ENCODE measurements at regions of chrX and their contacts with region 1.

Region 1: GRCh38 chrX:110116066-110116980 is 113.4 kb downstream of the TMEM164 start:
- DNase-seq: no peak
- H3K4me3 ChIP-seq: no peak overlapping the region
- H3K27ac ChIP-seq: no peak overlapping the region
- H3K4me1 ChIP-seq: peaks cover 9% of the 10 kb centered on the region
- H3K27me3 ChIP-seq: no peaks in the 10 kb centered on the region
- CTCF ChIP-seq: no peak

Region 2: DNA sequence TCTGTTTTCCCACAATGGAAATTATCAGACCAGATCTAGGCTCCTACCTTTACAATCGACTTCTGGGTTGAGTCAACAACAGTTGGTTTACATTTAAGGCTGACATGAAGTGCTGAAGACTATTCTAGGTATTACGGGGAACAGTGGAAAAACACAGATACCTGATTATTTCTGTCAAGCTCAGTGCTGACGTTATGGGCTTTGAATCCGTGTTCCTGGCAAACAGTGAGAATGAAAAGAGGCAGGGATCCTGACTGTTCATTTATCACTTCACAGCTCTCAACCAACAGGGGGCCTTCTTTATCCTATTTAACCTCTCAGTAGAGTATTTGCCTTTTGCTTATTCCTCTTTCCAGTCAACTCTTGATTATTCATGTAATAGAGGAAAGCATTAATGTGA is 70.3 kb before region 1 on chrX:
- CTCF ChIA-PET with region 1: no interaction called
- POLR2A ChIA-PET with region 1: no interaction called
- intact Hi-C with region 1: no loop called
- DNase-seq: no peak
- H3K4me3 ChIP-seq: no peak overlapping the region
- H3K27ac ChIP-seq: no peak overlapping the region
- H3K4me1 ChIP-seq: 0 out of 2 replicates have a peak, but pooled peaks cover 7% of the 10 kb centered on the region
- H3K27me3 ChIP-seq: no peaks in the 10 kb centered on the region
- CTCF ChIP-seq: no peak

Region 3: DNA sequence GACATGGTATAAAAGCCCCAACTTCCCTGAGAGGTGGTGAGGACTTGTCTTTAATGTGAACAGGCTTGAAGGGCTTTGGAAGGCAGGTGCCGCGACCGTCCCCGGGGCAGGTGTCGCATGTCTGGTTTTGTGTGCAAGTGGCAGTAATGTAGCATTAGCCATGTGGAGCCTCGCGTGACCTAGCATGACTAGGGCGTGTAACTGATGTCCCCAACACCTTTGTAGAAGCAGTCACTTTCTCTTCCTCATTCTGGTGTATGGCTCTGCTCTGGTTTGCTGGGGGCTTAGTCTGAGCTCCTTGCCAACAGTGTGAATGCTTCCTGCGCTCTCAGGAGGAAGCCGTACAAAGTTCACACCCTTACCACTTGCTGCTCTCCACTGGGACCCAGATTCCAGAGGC is 55.9 kb after region 1 on chrX:
- CTCF ChIA-PET with region 1: no interaction called
- POLR2A ChIA-PET with region 1: no interaction called
- intact Hi-C with region 1: no loop called
- DNase-seq: no peak
- H3K4me3 ChIP-seq: no peak overlapping the region
- H3K27ac ChIP-seq: no peak overlapping the region
- H3K4me1 ChIP-seq: peaks cover 38% of the 10 kb centered on the region
- H3K27me3 ChIP-seq: no peaks in the 10 kb centered on the region
- CTCF ChIP-seq: no peak

Region 4: DNA sequence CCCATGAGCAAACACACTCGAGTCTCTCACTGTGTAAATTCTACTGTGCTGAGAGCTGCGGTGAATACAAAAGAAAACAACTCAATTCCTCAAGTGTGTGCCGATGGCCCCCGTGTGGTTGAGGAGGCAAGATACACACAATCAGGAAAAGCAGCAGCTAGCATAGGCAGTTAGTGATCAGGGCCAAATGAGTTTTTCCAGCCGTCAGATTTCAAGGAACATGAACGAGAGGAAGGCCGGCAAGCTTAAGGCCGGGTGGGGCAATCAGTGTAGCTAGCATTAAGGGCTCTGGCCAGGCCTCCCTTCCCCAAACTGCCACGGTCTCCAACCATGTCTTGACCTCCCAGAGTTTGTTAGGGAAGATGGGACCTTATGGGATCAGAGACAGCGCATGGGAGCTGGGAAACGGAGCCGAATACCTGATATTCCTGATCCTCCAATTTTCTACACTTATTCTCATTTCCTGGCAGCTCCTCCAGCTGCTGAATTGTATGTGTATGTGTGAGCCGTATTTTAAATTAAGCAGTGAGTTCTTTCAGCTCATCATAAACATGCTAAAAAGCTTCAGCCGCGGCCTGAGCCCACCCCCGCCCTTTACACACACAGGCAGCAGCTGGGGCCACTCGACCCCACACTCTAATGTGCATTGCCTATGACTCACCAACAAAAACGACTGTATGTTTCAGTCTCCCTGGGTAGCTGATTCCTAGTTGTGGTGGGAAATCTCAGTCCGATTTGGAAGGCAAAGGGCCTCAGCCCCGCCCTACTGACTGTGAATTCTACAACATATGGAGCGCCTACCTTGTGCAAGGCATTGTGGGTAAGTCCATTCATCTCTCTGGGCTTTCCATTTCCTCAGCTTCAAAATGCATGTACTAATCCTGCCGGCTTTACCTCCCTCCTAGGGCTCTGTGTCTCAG is 302.3 kb after region 1 on chrX:
- CTCF ChIA-PET with region 1: no interaction called
- POLR2A ChIA-PET with region 1: interaction called, 14 read pairs
- intact Hi-C with region 1: no loop called
- DNase-seq: no peak
- H3K4me3 ChIP-seq: no peak overlapping the region
- H3K27ac ChIP-seq: no peak overlapping the region
- H3K4me1 ChIP-seq: 0 out of 2 replicates have a peak, but pooled peaks cover 7% of the 10 kb centered on the region
- H3K27me3 ChIP-seq: no peaks in the 10 kb centered on the region
- CTCF ChIP-seq: peak; percentile 48; the same call in 1 of the 2 replicates

Region 5: DNA sequence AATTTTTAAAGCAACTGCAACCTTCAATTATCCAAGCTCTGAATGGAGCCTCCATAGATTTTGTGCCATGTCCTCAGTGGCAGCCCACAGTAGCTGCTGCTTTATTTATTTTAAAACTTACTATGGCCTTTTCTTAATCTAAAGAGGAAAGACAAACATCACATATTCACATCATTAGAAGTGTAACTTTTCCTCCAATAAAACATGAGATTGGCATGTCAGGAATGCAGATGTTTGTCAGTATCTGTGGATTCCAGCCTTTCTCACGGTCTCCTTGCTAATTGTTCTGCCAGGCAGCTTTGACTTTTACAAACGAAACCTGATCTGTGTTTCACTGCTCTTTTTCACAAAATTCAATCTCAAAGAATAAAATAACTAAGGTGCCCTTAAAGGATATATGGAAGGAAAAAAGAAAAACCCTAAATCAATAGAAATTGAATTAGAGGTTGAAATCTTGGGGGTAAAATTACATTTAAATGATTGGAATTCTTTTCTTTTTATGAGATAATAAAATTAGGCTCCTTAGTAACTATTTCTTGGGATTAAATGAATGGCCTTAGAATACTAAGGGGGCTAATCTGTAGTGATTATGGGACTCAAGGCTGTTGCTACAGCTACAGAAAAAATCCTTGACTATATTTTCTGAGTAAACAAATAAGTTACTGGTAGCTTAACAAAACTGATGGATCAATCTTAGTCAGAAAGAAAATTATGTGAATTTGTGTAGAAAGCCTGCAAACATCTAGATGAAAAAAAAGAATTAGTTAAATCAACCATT is 393.6 kb after region 1 on chrX:
- CTCF ChIA-PET with region 1: no interaction called
- POLR2A ChIA-PET with region 1: no interaction called
- intact Hi-C with region 1: no loop called
- DNase-seq: peak; percentile 26 to 72
- H3K4me3 ChIP-seq: no peak overlapping the region
- H3K27ac ChIP-seq: peak overlapping the region; percentile 42
- H3K4me1 ChIP-seq: peaks cover 17% of the 10 kb centered on the region; the same call in 1 of the 2 replicates
- H3K27me3 ChIP-seq: no peaks in the 10 kb centered on the region
- CTCF ChIP-seq: no peak

Measured in PC-9 (cell line).